Sigmoid colon (tissue), 7 donors: ENCODE measurements at regions of chr18 and their contacts with region 1.

Region 1: GRCh38 chr18:9136315-9137155 is at the start of gene ANKRD12:
- DNase-seq: peak; percentile 99
- H3K4me3 ChIP-seq: peak within 1 kb of the TSS; percentile 63 to 91 (median 72)
- H3K27ac ChIP-seq: peak within 1 kb of the TSS; percentile 95 to 99 (median 98)
- H3K4me1 ChIP-seq: peaks cover 0 to 44% (median 41%) of the 10 kb centered on the region in 4 donors
- H3K27me3 ChIP-seq: no peaks in the 10 kb centered on the region
- CTCF ChIP-seq: no peak
- EP300 ChIP-seq: peak in 1 of 4 donors; percentile 39
- POLR2A ChIP-seq: peak; percentile 80 to 81
- total RNA-seq, gene ANKRD12: 88.5 to 132 (median 102) TPM

Region 2: DNA sequence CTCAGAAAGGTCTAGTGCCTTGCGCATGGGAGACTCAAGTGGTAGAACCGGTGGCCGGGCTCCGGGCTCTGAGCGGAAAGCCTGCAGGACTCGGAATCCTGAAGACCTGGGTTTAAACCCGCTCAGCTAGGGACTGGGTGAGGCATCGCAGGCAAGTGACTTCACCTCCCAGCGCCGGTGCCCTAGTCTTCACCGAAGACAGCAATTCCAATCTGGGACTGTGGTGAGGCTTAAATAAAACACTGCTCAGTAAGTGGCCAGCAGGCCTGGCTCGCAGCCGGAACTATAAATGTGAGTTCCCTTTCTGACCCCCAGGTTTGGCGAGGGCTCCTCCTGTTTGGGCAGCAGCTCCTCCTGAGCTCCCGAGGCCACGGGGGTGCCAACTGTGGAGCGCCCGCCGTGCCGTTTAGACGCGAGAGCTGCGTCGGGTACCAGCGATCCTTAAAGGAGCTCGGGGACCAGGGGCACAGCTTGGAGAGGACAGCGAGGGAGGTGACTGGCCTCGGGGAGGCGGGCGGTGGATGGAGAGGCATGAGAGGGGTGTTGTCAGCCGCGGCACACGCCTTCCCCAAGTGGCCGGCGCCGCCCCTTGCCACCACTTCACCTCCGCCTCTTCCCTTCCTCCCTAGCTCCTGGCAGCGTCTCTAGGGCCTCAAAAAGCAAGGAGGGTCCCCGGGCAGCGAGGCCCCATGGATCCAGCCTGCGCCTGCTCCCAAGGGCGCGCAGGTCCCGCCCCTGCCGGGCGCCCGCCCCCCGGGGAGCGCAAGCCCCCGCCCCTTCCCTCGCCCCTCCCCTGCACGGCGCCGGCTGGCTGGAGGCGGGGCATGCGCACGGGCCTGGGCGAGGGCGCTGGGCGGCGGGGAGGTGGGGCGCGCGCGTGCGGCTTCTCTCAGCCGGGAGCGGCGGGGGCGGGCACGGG is 431.9 kb before region 1 on chr18:
- intact Hi-C with region 1: loop called (anchors 5 kb)
- DNase-seq: peak; percentile 95
- H3K4me3 ChIP-seq: peak overlapping the region; percentile 49 to 93 (median 88)
- H3K27ac ChIP-seq: peak overlapping the region; percentile 95 to 96 (median 96)
- H3K4me1 ChIP-seq: peaks cover 0 to 40% (median 28%) of the 10 kb centered on the region in 4 donors
- H3K27me3 ChIP-seq: no peaks in the 10 kb centered on the region
- CTCF ChIP-seq: peak in 1 of 4 experiments; percentile 16
- EP300 ChIP-seq: peak in 1 of 4 donors; percentile 9
- POLR2A ChIP-seq: peak; percentile 58 to 61

Region 3: GRCh38 chr18:8969639-8970390 is 166.7 kb before region 1 on chr18:
- intact Hi-C with region 1: no loop called
- DNase-seq: no peak
- H3K4me3 ChIP-seq: no peak overlapping the region
- H3K27ac ChIP-seq: peak overlapping the region in 3 of 4 donors; percentile 78 to 88 (median 85)
- H3K4me1 ChIP-seq: peaks cover 0 to 44% (median 31%) of the 10 kb centered on the region in 4 donors
- H3K27me3 ChIP-seq: no peaks in the 10 kb centered on the region
- CTCF ChIP-seq: no peak
- EP300 ChIP-seq: no peak
- POLR2A ChIP-seq: no peak

Region 4: DNA sequence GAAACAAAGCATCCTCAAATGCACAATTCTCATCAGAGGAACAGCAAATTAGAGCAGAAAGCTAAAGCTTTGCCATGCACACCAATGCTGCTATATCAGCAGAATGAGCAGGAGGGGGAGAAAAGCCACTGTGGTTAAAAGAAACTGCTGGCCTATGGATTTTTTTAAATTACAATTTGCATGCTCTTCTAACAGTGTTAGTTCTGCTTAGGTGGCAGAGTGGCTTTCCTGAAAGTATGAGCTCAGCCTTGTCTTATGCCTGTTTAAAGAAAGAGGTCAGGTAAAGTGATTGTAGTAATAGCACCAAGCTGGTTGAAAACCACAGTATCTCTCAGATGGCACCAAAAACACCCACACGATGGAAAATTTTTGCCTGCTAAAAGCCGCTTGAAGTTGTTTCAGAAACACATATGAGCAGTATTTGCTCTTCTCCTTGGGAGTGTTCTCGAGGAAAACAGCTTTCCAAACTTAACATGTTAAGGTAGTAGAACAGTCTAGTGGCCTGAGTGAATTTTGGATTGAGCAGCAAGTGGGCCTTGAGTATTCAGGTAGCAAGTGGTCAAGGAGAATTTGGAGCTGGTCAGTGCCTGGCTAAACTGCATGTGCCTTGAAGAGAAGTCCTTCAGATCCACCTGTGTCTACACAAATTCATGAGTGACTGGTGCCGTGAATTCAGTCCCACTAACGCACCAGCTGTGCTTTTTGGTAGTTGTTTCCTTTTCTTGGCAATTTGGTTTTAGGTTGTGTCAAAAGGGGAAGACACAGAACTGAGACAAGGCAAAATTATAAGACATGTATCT is 53.6 kb before region 1 on chr18:
- intact Hi-C with region 1: no loop called
- DNase-seq: no peak
- H3K4me3 ChIP-seq: no peak overlapping the region
- H3K27ac ChIP-seq: peak overlapping the region in 1 of 4 donors; percentile 4
- H3K4me1 ChIP-seq: no peaks in the 10 kb centered on the region
- H3K27me3 ChIP-seq: no peaks in the 10 kb centered on the region
- CTCF ChIP-seq: no peak
- EP300 ChIP-seq: no peak
- POLR2A ChIP-seq: no peak

Region 5: DNA sequence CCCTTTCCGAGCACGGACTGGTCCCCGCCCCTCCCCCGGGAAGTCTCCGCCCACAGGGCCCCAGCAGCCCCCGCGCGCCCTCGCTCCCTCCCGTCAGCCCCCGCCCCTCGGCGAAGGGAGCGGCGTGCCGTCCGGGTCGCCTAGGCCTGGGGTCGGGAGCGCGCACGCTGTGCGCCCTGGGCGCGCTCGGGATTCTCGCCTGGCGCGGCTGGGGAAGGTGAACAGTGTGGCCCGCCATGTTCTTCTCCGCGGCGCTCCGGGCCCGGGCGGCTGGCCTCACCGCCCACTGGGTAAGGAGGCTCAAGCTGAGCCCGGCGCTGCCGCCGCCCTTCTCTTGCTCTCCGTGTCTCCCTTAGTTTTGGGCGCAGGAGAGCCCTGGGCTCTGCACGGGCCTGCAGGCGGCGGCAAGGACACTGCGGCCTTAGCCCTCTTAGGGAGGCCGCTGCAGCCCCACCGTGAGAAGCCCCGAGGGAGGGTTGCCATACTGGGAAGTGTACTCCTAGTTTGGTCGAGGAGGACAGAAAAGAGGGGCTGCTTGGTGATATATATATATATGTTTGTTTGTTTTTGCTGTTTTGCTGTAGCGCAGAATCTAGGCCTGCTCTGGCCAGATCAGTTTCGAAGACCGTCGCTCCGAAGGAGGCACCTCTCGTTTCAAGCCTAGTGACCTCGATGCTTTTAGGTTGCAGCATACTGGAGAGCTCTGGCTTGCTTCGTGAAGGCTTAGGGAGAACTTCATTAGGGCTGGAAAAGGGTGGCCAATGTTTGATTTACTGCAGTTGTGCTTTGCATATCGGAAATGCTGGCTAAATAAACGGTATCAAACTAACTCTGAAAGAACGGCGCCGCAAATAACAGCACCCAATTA is 33.8 kb before region 1 on chr18 and contains the start of gene NDUFV2:
- intact Hi-C with region 1: loop called (anchors 1 kb)
- DNase-seq: peak; percentile 98
- H3K4me3 ChIP-seq: peak within 1 kb of the TSS; percentile 72 to 80 (median 77)
- H3K27ac ChIP-seq: peak within 1 kb of the TSS; percentile 90 to 96 (median 94)
- H3K4me1 ChIP-seq: peaks cover 0 to 52% (median 47%) of the 10 kb centered on the region in 4 donors
- H3K27me3 ChIP-seq: no peaks in the 10 kb centered on the region
- CTCF ChIP-seq: no peak
- EP300 ChIP-seq: no peak
- POLR2A ChIP-seq: peak; percentile 89 to 90
- total RNA-seq, gene NDUFV2: 81.3 to 131 (median 115) TPM

Region 6: DNA sequence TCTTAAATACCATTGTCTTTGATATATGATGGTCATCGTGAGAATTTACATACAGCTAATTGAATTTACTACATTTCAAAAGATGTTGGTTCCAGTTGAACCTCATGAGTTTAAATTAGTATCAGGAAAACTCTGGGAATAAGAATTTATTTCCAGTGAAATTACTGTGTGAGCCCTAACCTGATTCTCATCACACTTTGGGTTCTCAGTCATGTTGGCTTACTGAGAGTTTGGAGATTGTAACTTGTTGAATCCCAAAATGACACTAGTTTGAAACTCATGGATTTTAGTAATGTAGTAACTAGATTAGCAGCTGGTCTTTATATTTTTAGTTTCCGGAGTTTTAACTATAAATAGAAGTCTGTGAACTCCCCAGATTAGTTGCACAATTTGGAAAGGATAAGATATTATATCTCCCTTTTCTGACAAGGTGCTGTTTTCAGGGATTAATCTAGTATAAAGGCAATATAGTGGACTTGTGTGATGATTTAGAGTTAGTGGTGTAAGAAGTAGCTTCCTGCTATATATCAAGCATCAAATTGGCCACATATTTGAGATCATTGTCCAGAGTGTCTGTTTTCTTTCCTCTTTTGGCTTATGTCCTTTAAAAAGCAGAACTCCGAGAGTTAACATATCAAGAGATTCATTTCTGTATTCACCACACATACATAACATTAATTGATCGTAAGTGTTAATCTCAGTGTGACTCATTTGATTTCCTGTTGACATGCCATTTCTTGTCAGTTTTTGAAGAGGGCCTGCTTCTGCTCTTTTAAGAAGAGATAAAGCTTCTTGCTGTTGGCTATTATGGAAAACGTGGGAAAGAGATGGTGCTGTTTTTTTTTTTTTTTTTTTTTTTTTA is 18.3 kb before region 1 on chr18:
- intact Hi-C with region 1: loop called (anchors 2 kb)
- DNase-seq: no peak
- H3K4me3 ChIP-seq: peak overlapping the region in 1 of 4 donors; percentile 24
- H3K27ac ChIP-seq: peak overlapping the region; percentile 82 to 96 (median 93)
- H3K4me1 ChIP-seq: peaks cover 0 to 98% (median 65%) of the 10 kb centered on the region in 4 donors
- H3K27me3 ChIP-seq: no peaks in the 10 kb centered on the region
- CTCF ChIP-seq: no peak
- EP300 ChIP-seq: peak in 1 of 4 donors; percentile 16
- POLR2A ChIP-seq: no peak

Region 7: DNA sequence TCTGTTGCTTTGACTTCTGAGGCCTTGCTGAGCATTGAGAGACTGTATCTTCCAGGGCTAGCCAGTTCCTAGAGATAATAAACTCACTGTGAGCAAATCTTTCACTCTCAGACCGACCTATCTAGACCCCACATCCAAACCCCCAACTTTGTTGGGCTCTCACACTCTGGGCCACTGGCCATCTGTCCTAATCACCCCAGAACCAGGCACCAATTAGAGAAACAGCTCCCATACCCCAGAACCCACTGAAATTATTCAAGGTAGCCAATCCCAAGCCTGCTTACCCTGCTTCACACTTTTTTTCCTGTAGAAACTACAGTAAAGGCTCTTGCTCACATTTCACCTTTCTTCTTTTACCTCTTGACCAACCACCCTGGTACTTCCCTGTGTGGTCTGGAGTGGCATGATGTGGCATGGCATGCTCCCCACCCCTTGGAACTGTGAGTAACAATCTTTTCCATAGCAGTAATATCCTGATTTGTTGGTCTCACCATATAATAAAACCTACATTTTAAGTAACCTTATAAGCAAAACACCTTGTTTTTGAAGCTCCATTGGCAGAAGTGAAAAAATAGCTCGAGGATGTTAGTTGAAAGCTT is 55.2 kb after region 1 on chr18:
- intact Hi-C with region 1: no loop called
- DNase-seq: no peak
- H3K4me3 ChIP-seq: no peak overlapping the region
- H3K27ac ChIP-seq: no peak overlapping the region
- H3K4me1 ChIP-seq: peaks cover 0 to 9% (median 3%) of the 10 kb centered on the region in 4 donors
- H3K27me3 ChIP-seq: no peaks in the 10 kb centered on the region
- CTCF ChIP-seq: no peak
- EP300 ChIP-seq: no peak
- POLR2A ChIP-seq: no peak

Region 8: DNA sequence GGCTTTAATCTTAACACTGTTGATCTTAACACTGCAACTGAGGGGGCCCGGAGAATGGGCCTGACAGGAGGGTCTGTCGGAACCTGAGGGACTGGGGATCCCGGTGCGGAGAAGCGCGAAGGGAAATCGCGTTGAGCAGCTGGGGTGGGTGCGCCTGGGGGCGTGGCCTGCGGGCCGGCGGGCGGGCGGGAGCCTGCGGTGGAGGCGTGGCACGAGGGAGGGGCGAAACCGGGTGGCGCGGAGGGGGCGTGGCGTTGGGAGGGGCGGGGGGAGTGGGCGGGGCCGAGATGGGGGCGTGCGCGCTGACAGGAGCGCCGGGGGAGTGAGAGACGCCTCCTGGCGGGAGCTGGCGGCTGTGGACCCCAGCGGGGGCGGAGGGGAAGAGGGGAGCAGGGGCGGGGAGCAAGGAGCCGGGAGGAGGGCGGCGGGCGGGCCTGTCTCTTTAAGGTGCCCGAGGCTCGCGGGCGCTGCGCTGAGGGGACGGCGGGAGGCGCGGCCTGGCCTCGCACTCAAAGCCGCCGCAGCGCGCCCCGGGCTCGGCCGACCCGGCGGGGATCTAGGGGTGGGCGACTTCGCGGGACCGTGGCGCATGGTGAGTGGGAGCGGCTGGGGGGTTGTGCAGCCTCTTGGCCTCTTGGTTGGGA is 197.9 kb after region 1 on chr18 and contains the start of gene TWSG1:
- intact Hi-C with region 1: loop called (anchors 5 kb)
- DNase-seq: peak; percentile 98
- H3K4me3 ChIP-seq: peak within 1 kb of the TSS; percentile 76 to 98 (median 94)
- H3K27ac ChIP-seq: peak within 1 kb of the TSS; percentile 96 to 99 (median 97)
- H3K4me1 ChIP-seq: peaks cover 0 to 34% (median 19%) of the 10 kb centered on the region in 4 donors
- H3K27me3 ChIP-seq: no peaks in the 10 kb centered on the region
- CTCF ChIP-seq: peak in 2 of 4 experiments; percentile 9 to 52
- EP300 ChIP-seq: no peak
- POLR2A ChIP-seq: peak; percentile 32 to 41
- total RNA-seq, gene TWSG1: 69.2 to 88.3 (median 79.1) TPM

Region 9: DNA sequence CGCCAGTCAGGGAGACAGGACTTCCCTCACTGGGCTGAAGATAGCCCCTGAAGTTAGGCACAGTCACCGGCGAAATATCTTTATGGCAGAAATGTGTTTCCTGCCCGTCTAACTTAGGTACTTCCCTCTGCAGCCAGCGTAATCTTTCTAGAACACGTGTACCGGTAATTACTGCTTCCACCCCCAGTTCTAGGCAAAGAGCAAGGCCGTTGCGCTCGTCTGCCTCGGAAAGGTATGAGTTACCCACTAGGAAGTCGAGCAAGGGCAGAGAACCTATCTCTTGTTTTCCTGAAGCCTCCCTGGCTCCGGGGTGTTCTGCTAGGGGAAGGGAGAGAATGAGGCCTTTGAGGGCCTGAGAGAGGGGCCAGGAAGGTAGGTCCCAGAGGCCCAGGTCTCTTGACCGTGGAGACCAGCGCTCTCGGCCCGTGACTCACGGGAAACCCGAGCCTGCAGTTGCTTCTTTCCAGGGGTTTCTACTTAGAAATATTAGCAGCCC is 268.1 kb after region 1 on chr18:
- intact Hi-C with region 1: no loop called
- DNase-seq: no peak
- H3K4me3 ChIP-seq: no peak overlapping the region
- H3K27ac ChIP-seq: peak overlapping the region in 1 of 4 donors; percentile 41
- H3K4me1 ChIP-seq: no peaks in the 10 kb centered on the region
- H3K27me3 ChIP-seq: no peaks in the 10 kb centered on the region
- CTCF ChIP-seq: no peak
- EP300 ChIP-seq: no peak
- POLR2A ChIP-seq: no peak

Region 10: DNA sequence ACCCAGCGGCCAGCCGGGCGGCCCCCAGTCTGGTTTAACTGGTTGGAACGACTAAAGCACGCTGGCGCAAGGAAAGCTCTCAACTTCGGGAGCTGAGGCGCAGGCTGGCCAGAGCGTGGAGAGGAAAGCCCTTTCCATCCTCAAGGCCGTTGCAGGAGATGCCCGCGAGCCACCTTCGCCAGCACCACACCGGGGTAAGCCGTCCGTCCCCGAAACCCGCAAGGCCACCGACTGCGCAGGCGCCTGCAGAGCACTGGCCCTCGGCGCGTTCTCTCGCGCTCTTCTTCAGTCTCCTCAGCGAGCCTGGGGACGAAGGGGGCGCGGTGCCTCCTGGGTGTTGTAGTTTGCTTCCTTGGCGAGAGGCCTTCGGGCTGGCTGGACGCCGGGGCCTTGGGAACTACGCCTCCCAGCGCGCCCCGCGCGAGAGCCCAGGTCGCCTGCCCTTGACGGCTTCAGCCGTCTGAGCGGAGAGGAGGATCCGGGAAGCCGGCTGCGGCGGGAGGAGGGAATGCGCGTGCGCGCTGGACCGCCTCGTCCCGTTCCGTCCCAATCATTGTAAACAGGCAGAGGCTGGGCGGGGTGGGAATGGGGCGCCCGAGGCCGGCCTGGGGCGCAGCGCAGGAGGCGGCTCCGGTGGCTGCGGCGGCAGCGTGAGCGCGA is 338.6 kb after region 1 on chr18 and contains the start of gene RALBP1:
- intact Hi-C with region 1: loop called (anchors 5 kb)
- DNase-seq: peak; percentile 100
- H3K4me3 ChIP-seq: peak within 1 kb of the TSS; percentile 71 to 99 (median 88)
- H3K27ac ChIP-seq: peak within 1 kb of the TSS; percentile 90 to 95 (median 92)
- H3K4me1 ChIP-seq: peaks cover 0 to 26% (median 14%) of the 10 kb centered on the region in 4 donors
- H3K27me3 ChIP-seq: no peaks in the 10 kb centered on the region
- CTCF ChIP-seq: no peak
- EP300 ChIP-seq: peak in 1 of 4 donors; percentile 8
- POLR2A ChIP-seq: peak; percentile 70 to 74
- total RNA-seq, gene RALBP1: 68.1 to 89.7 (median 86.6) TPM